AG04450 (cell line): ENCODE measurements at regions of chr2 and their contacts with region 1.

Region 1: DNA sequence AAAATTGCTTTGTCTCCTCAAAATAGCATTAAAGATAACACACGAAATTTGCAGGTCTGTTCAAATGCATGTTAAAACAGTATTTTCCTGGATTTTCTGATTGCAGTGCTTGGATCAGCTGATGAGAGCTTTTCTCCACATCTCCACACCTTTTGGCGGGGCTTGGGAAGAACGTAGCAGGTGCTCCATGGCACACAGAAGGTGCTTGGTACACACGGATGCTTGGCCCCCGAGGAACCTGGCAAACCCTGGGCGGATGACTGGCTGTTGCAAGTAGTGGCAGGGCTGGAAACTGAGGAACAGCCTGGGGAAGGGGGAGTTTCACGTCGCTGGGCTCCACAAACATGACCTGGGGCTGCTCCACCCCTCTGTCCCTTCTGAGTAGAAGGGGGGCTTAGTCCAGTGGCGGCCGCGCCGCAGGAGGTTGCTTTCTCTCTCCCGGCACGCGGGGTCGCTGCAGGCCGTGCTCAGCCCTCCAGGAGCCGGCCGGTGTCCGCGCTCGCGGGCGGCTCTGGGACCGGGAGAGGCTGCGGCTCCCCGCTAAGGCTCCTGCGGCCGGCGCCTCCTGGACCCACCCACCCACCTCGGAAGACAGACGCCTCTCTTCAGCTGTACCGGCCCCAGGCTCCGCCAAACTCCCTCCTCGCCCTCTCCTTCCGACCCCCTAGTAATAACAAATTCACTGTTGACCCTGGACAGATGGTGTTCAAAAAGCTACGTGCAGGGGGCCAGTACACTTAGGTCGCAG is 69.3 kb downstream of the MARCO start:
- DNase-seq: no peak
- H3K4me3 ChIP-seq: no peak overlapping the region
- H3K27ac ChIP-seq: no peak overlapping the region
- H3K27me3 ChIP-seq: peaks cover 4% of the 10 kb centered on the region
- CTCF ChIP-seq: peak; percentile 53

Region 2: GRCh38 chr2:119028327-119029174 is 17.2 kb after region 1 on chr2:
- CTCF ChIA-PET with region 1: interaction called, 13 read pairs
- POLR2A ChIA-PET with region 1: no interaction called
- DNase-seq: peak; percentile 7
- H3K4me3 ChIP-seq: no peak overlapping the region
- H3K27ac ChIP-seq: no peak overlapping the region
- H3K27me3 ChIP-seq: peaks cover 2% of the 10 kb centered on the region
- CTCF ChIP-seq: peak; percentile 66

Region 3: GRCh38 chr2:119338826-119339561 is 327.7 kb after region 1 on chr2:
- CTCF ChIA-PET with region 1: interaction called, 11 read pairs
- POLR2A ChIA-PET with region 1: no interaction called
- DNase-seq: no peak
- H3K4me3 ChIP-seq: no peak overlapping the region
- H3K27ac ChIP-seq: no peak overlapping the region
- H3K27me3 ChIP-seq: no peaks in the 10 kb centered on the region
- CTCF ChIP-seq: no peak